Spleen (tissue), 13 donors: ENCODE measurements at regions of chr7 and their contacts with region 1.

Region 1: GRCh38 chr7:105652359-105652993 is 71.2 kb upstream of the EFCAB10 start:
- DNase-seq: peak; percentile 89
- H3K4me3 ChIP-seq: no peak overlapping the region
- H3K27ac ChIP-seq: no peak overlapping the region
- H3K4me1 ChIP-seq: peaks cover 0 to 29% (median 12%) of the 10 kb centered on the region in 6 donors
- H3K27me3 ChIP-seq: no peaks in the 10 kb centered on the region
- CTCF ChIP-seq: peak; percentile 52 to 85 (median 74)
- POLR2A ChIP-seq: no peak

Region 2: GRCh38 chr7:105565190-105565589 is 87.3 kb before region 1 on chr7:
- intact Hi-C with region 1: no loop called
- DNase-seq: no peak
- H3K4me3 ChIP-seq: no peak overlapping the region
- H3K27ac ChIP-seq: no peak overlapping the region
- H3K4me1 ChIP-seq: no peaks in the 10 kb centered on the region
- H3K27me3 ChIP-seq: no peaks in the 10 kb centered on the region
- CTCF ChIP-seq: no peak
- POLR2A ChIP-seq: no peak

Region 3: DNA sequence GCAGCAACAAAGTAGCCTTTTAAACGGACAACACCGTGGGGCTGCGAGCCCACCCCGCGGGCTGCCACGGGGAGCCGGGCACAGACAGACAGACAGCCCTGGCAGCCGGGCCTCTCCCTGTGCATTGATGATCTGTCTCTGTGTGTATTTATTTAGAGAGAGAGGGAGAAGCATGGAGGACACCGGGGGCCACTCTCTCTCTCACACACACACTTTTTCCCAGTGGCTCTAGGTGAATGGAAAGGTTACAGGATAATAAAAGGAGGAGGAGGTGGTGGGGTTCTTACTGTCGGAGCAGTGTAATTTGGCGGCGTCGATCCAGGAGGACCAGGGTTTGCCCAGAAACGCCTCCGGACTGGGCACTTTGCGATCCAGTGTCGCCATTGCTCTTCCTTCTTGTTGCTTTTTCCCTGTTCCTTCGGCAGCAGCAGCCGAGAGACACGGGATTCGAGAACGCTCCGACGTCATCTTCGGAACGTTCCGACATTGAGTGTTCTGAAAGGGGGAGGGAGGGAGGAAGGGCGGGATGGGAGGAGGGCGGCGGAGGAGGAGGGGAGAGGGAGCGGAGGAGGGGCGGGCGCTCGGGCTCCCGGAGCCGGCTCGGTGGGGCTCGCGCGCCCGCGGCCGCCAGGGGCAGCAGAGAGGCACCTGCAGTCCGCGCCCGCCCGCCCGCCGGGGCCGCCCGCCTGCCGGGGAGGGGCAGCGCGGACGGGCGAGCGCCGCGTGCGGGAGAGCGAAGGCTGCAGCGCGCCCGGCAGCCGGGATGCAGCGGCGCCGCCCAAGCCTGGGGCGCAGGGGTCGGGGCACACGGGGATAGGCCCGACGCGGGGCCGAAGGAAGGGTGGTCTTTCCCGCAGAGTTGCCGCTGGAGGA is 223.9 kb after region 1 on chr7 and contains the start of gene ATXN7L1:
- intact Hi-C with region 1: loop called (anchors 10 kb)
- DNase-seq: peak; percentile 97
- H3K4me3 ChIP-seq: peak within 1 kb of the TSS; percentile 37 to 91 (median 61)
- H3K27ac ChIP-seq: peak within 1 kb of the TSS; percentile 54 to 84 (median 73)
- H3K4me1 ChIP-seq: peaks cover 6 to 48% (median 24%) of the 10 kb centered on the region in 6 donors
- H3K27me3 ChIP-seq: peaks cover 0 to 20% (median 4%) of the 10 kb centered on the region in 7 donors
- CTCF ChIP-seq: peak in 9 of 11 experiments; percentile 25 to 80 (median 63)
- POLR2A ChIP-seq: peak in 1 of 3 donors; percentile 41
- total RNA-seq, gene ATXN7L1: 14.0 to 29.3 (median 23.2) TPM

Region 4: GRCh38 chr7:106009403-106010226 is 357.1 kb after region 1 on chr7:
- intact Hi-C with region 1: loop called (anchors 10 kb)
- DNase-seq: peak; percentile 93
- H3K4me3 ChIP-seq: no peak overlapping the region
- H3K27ac ChIP-seq: peak overlapping the region in 2 of 8 donors; percentile 2 to 4
- H3K4me1 ChIP-seq: peaks cover 5 to 17% (median 12%) of the 10 kb centered on the region in 6 donors
- H3K27me3 ChIP-seq: no peaks in the 10 kb centered on the region
- CTCF ChIP-seq: peak; percentile 84 to 99 (median 95)
- POLR2A ChIP-seq: no peak

Region 5: GRCh38 chr7:106041140-106041717 is 388.8 kb after region 1 on chr7:
- intact Hi-C with region 1: loop called (anchors 5 kb)
- DNase-seq: no peak
- H3K4me3 ChIP-seq: no peak overlapping the region
- H3K27ac ChIP-seq: no peak overlapping the region
- H3K4me1 ChIP-seq: peaks cover 4 to 25% (median 14%) of the 10 kb centered on the region in 6 donors
- H3K27me3 ChIP-seq: peaks cover 0 to 21% (median 0%) of the 10 kb centered on the region in 7 donors
- CTCF ChIP-seq: peak; percentile 44 to 85 (median 72)
- POLR2A ChIP-seq: no peak